ENCODE measurements at regions of chr14 and their contacts with region 1.

Region 1: GRCh38 chr14:69191340-69192111 is at the start of gene EXD2:
- DNase-seq: peak; percentile 95
- ATAC-seq: peak; percentile 97
- H3K4me3 ChIP-seq: peak within 1 kb of the TSS; percentile 84
- H3K27ac ChIP-seq: peak within 1 kb of the TSS; percentile 56
- H3K4me1 ChIP-seq: peaks cover 13% of the 10 kb centered on the region
- H3K27me3 ChIP-seq: no peaks in the 10 kb centered on the region
- CTCF ChIP-seq: no peak
- total RNA-seq, gene EXD2: 19.0 and 19.9 TPM in 2 replicates

Region 2: GRCh38 chr14:69204753-69205152 is 13.2 kb after region 1 on chr14:
- CTCF ChIA-PET with region 1: interaction called, 6 read pairs
- POLR2A ChIA-PET with region 1: no interaction called
- intact Hi-C with region 1: loop called (anchors 1 kb)
- DNase-seq: peak; percentile 84
- ATAC-seq: peak; percentile 99
- H3K4me3 ChIP-seq: no peak overlapping the region
- H3K27ac ChIP-seq: peak overlapping the region; percentile 75
- H3K4me1 ChIP-seq: peaks cover 15% of the 10 kb centered on the region
- H3K27me3 ChIP-seq: no peaks in the 10 kb centered on the region
- CTCF ChIP-seq: no peak

Region 3: DNA sequence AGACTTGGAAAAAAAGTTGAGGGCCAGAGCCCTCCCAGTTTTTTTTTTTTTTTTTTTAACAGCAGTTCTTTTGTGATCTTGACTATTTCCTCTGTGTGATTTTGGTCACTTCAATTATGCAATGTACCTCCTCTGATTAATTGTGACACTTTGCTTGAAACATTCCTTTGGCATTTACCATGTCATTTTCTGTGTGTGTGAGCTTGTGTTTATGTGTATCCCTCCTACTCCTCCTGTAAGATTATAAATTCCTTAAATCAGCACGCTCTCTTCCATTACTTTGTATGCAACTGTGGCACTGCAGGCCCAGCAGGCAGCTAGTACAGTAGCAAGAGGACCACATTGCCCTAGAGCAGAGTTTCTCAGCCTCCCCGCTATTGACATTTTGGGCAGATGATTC is 35.2 kb after region 1 on chr14:
- CTCF ChIA-PET with region 1: no interaction called
- POLR2A ChIA-PET with region 1: no interaction called
- intact Hi-C with region 1: no loop called
- DNase-seq: no peak
- ATAC-seq: no peak
- H3K4me3 ChIP-seq: no peak overlapping the region
- H3K27ac ChIP-seq: no peak overlapping the region
- H3K4me1 ChIP-seq: no peaks in the 10 kb centered on the region
- H3K27me3 ChIP-seq: no peaks in the 10 kb centered on the region
- CTCF ChIP-seq: no peak

Region 4: DNA sequence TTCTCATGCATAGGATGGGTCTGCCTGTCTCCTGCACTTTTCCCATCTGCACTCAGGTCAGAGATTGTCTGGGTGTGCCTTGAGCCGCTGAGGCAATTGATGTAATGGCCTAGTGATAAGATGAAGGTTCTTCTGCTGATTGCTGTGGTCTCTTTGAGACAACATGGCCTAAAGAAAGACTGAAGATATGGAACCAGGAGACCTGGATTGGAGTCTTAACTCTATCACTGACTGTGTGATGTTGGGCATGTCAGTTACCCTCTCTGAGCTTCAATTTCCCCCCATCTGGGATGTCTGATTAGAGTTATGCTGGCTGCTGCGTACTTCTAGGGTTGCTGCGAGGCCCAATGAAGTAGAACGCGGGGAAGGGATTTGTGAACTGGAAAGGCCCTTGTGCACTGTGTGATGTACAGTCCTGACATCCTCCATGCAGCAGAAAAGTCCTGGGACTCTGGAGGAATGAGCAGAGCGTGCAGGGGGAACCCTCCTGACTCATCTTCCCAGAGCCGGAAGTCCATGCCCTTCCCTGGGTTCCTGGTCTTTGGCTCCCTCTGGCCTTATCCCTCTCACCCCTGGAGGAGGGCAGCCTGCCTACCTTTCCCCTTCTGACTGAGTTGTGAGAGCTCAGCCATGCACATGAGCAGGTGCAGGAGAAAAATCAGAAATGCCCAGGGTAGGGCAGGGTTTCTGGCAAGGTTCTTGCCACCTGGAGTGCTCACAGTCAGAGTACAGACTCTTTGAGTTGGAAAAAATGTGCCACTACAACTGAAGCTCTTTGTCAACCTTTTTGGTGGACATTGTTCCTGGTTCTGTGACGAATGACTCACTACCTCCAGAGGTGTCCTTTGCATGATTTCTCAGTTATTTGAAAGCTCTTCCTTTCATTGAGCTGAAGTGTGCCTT is 314.1 kb after region 1 on chr14:
- CTCF ChIA-PET with region 1: no interaction called
- POLR2A ChIA-PET with region 1: no interaction called
- intact Hi-C with region 1: no loop called
- DNase-seq: no peak
- ATAC-seq: peak; percentile 28
- H3K4me3 ChIP-seq: no peak overlapping the region
- H3K27ac ChIP-seq: no peak overlapping the region
- H3K4me1 ChIP-seq: no peaks in the 10 kb centered on the region
- H3K27me3 ChIP-seq: peaks cover 18% of the 10 kb centered on the region
- CTCF ChIP-seq: no peak